ENCODE measurements at regions of chr3 and their contacts with region 1.

Region 1: GRCh38 chr3:139427283-139427993 is 38.0 kb upstream of the COPB2 start:
- DNase-seq: no peak
- H3K4me3 ChIP-seq: no peak overlapping the region
- H3K27ac ChIP-seq: no peak overlapping the region
- H3K4me1 ChIP-seq: peaks cover 0 to 10% (median 0%) of the 10 kb centered on the region in 6 donors
- H3K27me3 ChIP-seq: no peaks in the 10 kb centered on the region
- CTCF ChIP-seq: peak; percentile 53 to 83 (median 77)
- POLR2A ChIP-seq: no peak

Region 2: DNA sequence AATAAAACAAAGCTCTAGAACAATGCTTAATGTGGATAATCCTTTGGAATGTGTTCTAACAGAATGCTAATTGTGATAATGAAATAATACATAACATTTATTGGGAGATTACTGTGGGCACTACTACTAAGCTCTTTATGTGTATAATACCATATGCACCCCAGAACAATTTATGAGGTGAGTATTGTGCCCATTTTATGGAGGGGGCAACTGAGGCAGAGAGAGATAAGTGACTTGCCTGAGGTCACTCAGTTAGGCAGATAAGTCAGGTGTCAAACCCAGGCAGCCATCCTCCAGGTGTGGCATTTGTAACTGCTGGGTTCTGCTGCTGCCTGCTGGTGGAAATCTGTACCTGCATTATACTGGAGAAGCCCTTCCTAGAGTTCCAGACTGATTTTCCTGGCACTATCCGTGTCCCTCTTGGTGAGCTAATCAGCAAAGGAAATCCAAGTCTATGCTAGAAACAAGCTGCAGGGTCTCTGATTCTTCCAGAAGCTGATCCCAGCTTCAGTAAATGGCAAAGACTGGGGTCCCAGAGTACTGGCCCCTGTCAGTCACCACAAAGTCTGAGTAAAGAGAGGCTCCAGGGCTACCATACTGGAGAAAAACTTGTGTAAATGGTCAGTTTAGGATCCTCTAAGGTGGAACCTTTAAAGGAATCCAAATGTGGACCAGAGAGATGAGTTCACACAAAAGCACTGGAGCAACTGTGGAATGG is 134.7 kb after region 1 on chr3:
- intact Hi-C with region 1: loop called (anchors 5 kb)
- DNase-seq: no peak
- H3K4me3 ChIP-seq: no peak overlapping the region
- H3K27ac ChIP-seq: no peak overlapping the region
- H3K4me1 ChIP-seq: no peaks in the 10 kb centered on the region
- H3K27me3 ChIP-seq: no peaks in the 10 kb centered on the region
- CTCF ChIP-seq: peak in 10 of 11 experiments; percentile 5 to 54 (median 42)
- POLR2A ChIP-seq: no peak

Region 3: GRCh38 chr3:140863580-140864009 is 1436.2 kb after region 1 on chr3:
- intact Hi-C with region 1: loop called (anchors 5 kb)
- DNase-seq: no peak
- H3K4me3 ChIP-seq: no peak overlapping the region
- H3K27ac ChIP-seq: no peak overlapping the region
- H3K4me1 ChIP-seq: peaks cover 0 to 7% (median 0%) of the 10 kb centered on the region in 6 donors
- H3K27me3 ChIP-seq: peaks cover 0 to 6% (median 0%) of the 10 kb centered on the region in 7 donors
- CTCF ChIP-seq: peak in 8 of 11 experiments; percentile 22 to 53 (median 40)
- POLR2A ChIP-seq: no peak

Measured in spleen (tissue), 13 donors.